Activated T-helper 1 cell treated with anti-CD3 and anti-CD28 coated beads, Interleukin-12 subunit alpha, Interleukin-12 subunit beta, Interleukin-2, Interleukin-4 antibody, amounts not matched to agents 30 ng/mL and 10 ng/mL and 1 ng/mL, durations not matched to agents 14 hours and 24 hours and 36 hours (primary cell): ENCODE measurements at regions of chr3 and their contacts with region 1.

Region 1: GRCh38 chr3:10263646-10264363 is 15.5 kb downstream of the TATDN2 start:
- DNase-seq: peak; percentile 51
- H3K4me3 Mint-ChIP-seq: peak overlapping the region; percentile 79
- H3K27ac Mint-ChIP-seq: peak overlapping the region; percentile 80
- H3K4me1 Mint-ChIP-seq: peaks cover 74% of the 10 kb centered on the region
- H3K27me3 Mint-ChIP-seq: no peaks in the 10 kb centered on the region

Region 2: GRCh38 chr3:8399686-8400085 is 1864.1 kb before region 1 on chr3:
- intact Hi-C with region 1: no loop called
- DNase-seq: no peak
- H3K4me3 Mint-ChIP-seq: no peak overlapping the region
- H3K27ac Mint-ChIP-seq: no peak overlapping the region
- H3K4me1 Mint-ChIP-seq: no peaks in the 10 kb centered on the region
- H3K27me3 Mint-ChIP-seq: no peaks in the 10 kb centered on the region

Region 3: DNA sequence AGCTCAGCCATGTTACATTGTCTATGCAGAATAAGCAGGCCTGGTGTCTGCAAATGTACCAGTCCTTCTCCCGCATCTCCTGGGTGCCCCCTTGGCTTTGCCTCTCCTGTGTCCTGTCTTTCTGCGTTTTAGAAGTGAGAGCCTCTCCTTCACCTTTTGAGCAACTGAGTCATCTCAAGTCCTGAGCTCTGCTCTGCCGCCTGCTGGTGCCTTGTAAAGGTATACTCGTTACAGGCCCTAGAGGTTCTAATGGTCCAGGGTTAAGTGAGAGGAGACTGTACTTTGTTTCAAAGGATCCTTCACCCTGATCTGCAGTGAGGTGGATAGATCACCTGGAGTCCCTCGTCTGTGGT is 16.3 kb after region 1 on chr3:
- intact Hi-C with region 1: no loop called
- DNase-seq: no peak
- H3K4me3 Mint-ChIP-seq: no peak overlapping the region
- H3K27ac Mint-ChIP-seq: peak overlapping the region; percentile 48
- H3K4me1 Mint-ChIP-seq: peaks cover 56% of the 10 kb centered on the region
- H3K27me3 Mint-ChIP-seq: no peaks in the 10 kb centered on the region

Region 4: GRCh38 chr3:10299679-10300078 is 35.9 kb after region 1 on chr3:
- intact Hi-C with region 1: loop called (anchors 5 kb)
- DNase-seq: no peak
- H3K4me3 Mint-ChIP-seq: no peak overlapping the region
- H3K27ac Mint-ChIP-seq: peak overlapping the region; percentile 16
- H3K4me1 Mint-ChIP-seq: peaks cover 12% of the 10 kb centered on the region
- H3K27me3 Mint-ChIP-seq: no peaks in the 10 kb centered on the region

Region 5: GRCh38 chr3:10445561-10446175 is 181.9 kb after region 1 on chr3:
- intact Hi-C with region 1: no loop called
- DNase-seq: no peak
- H3K4me3 Mint-ChIP-seq: no peak overlapping the region
- H3K27ac Mint-ChIP-seq: no peak overlapping the region
- H3K4me1 Mint-ChIP-seq: peaks cover under 1% of the 10 kb centered on the region
- H3K27me3 Mint-ChIP-seq: peaks cover 4% of the 10 kb centered on the region